ENCODE measurements at regions of chr18 and their contacts with region 1.

Region 1: GRCh38 chr18:10519999-10520935 is 5.6 kb upstream of the NAPG start:
- DNase-seq: peak; percentile 73
- H3K4me3 ChIP-seq: peak overlapping the region in 1 of 2 experiments; percentile 37; a peak in 1 of 4 replicates
- H3K27ac ChIP-seq: no peak overlapping the region
- H3K4me1 ChIP-seq: peaks cover 0 to 12% of the 10 kb centered on the region in 2 experiments; a peak in 3 of 4 replicates
- H3K27me3 ChIP-seq: no peaks in the 10 kb centered on the region; the same call in 1 of the 2 replicates
- CTCF ChIP-seq: peak; percentile 88
- EP300 ChIP-seq: no peak
- RAD21 ChIP-seq: peak; percentile 98

Region 2: GRCh38 chr18:9971313-9971920 is 548.9 kb before region 1 on chr18:
- CTCF ChIA-PET with region 1: interaction called, 210 read pairs
- POLR2A ChIA-PET with region 1: no interaction called
- DNase-seq: peak; percentile 70
- H3K4me3 ChIP-seq: no peak overlapping the region; a peak in 1 of 4 replicates
- H3K27ac ChIP-seq: no peak overlapping the region
- H3K4me1 ChIP-seq: no peaks in the 10 kb centered on the region
- H3K27me3 ChIP-seq: no peaks in the 10 kb centered on the region
- CTCF ChIP-seq: peak; percentile 83
- EP300 ChIP-seq: no peak
- RAD21 ChIP-seq: peak; percentile 100

Region 3: GRCh38 chr18:9993521-9994305 is 526.6 kb before region 1 on chr18:
- CTCF ChIA-PET with region 1: interaction called, 14 read pairs
- POLR2A ChIA-PET with region 1: no interaction called
- DNase-seq: no peak
- H3K4me3 ChIP-seq: no peak overlapping the region
- H3K27ac ChIP-seq: no peak overlapping the region
- H3K4me1 ChIP-seq: peaks cover 0 to 2% of the 10 kb centered on the region in 2 experiments; a peak in 1 of 4 replicates
- H3K27me3 ChIP-seq: no peaks in the 10 kb centered on the region; the same call in 1 of the 2 replicates
- CTCF ChIP-seq: no peak
- EP300 ChIP-seq: no peak
- RAD21 ChIP-seq: no peak

Region 4: DNA sequence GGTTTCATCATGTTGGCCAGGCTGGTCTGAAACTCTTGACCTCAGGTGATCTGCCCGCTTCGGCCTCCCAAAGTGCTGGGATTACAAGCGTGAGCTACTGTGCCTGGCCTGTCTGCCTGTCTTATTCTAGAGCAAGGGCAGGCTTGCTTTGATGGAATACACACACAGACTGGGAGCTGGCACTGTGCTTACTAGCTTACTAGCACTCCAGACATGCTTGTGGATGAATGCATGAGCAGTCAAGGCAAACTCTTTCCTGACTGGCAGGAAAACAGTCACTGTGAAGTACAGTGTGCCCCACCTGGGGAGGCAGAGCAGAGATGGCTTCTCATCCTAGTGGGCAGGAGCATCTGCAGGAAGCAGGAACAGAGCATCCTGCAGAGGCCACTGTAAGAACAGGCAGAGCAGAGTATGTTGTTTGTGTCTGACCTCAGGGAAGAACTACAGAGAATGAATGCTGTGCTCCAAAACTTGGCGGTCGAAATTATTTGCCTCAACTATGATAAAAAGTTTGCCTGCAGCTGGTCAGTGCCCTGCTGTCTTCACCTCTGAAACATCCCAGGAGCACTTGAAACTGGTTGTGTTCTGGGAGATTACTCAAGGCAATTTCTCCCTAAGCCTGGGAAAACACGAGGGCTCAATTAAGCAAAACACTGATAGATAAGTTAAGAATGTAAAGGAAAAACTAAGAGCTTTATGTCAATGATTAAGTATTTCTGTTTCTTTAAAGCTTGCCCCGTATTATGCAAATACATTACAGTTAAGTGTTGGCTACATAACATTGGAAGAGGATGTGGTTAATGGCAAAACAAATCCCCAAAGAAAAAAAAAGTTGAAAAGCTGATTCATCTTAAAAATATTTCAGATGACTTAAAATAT is 504.1 kb before region 1 on chr18:
- CTCF ChIA-PET with region 1: interaction called, 19 read pairs
- POLR2A ChIA-PET with region 1: no interaction called
- DNase-seq: peak; percentile 34
- H3K4me3 ChIP-seq: no peak overlapping the region
- H3K27ac ChIP-seq: peak overlapping the region; percentile 67 to 94; a peak in 3 of 4 replicates
- H3K4me1 ChIP-seq: peaks cover 0 to 16% of the 10 kb centered on the region in 2 experiments
- H3K27me3 ChIP-seq: no peaks in the 10 kb centered on the region
- CTCF ChIP-seq: peak; percentile 45
- EP300 ChIP-seq: peak in 1 of 2 experiments; percentile 40; a peak in 1 of 4 replicates
- RAD21 ChIP-seq: peak; percentile 59

Region 5: GRCh38 chr18:10169064-10169562 is 351.2 kb before region 1 on chr18:
- CTCF ChIA-PET with region 1: no interaction called
- POLR2A ChIA-PET with region 1: no interaction called
- DNase-seq: peak; percentile 48
- H3K4me3 ChIP-seq: no peak overlapping the region
- H3K27ac ChIP-seq: peak overlapping the region; percentile 19 to 52; a peak in 3 of 4 replicates
- H3K4me1 ChIP-seq: peaks cover 7 to 13% of the 10 kb centered on the region in 2 experiments; a peak in 2 of 4 replicates
- H3K27me3 ChIP-seq: no peaks in the 10 kb centered on the region
- CTCF ChIP-seq: no peak
- EP300 ChIP-seq: peak in 1 of 2 experiments; percentile 44; a peak in 1 of 4 replicates
- RAD21 ChIP-seq: no peak

Region 6: DNA sequence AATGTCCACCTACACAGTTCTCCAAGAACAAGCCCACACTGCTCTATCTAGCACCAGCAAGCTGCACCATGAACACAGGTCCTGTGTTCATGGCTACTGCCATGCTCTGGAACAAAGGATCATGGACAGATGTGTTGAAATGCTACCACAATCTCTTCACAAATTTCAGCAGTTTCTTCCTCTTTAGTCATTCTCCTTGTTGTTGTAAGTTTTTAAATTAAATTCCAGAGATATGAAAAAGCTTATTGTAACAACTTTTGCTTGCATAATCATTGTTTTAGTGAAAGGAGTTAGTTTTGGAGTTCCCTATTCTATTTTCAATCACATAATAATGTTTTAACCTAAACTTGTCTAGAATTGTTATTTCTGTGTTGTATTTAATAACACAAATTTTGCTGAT is 11.7 kb before region 1 on chr18:
- CTCF ChIA-PET with region 1: interaction called, 19 read pairs
- POLR2A ChIA-PET with region 1: no interaction called
- DNase-seq: no peak
- H3K4me3 ChIP-seq: no peak overlapping the region
- H3K27ac ChIP-seq: no peak overlapping the region
- H3K4me1 ChIP-seq: no peaks in the 10 kb centered on the region
- H3K27me3 ChIP-seq: no peaks in the 10 kb centered on the region
- CTCF ChIP-seq: no peak
- EP300 ChIP-seq: no peak
- RAD21 ChIP-seq: no peak